H1 (cell line): ENCODE measurements at regions of chr1 and their contacts with region 1.

Region 1: GRCh38 chr1:47262787-47263413 is 30.9 kb upstream of the TAL1 start:
- DNase-seq: peak in 1 of 2 experiments; percentile 73
- H3K4me3 ChIP-seq: no peak overlapping the region
- H3K27ac ChIP-seq: no peak overlapping the region
- H3K4me1 ChIP-seq: no peaks in the 10 kb centered on the region
- H3K27me3 ChIP-seq: no peaks in the 10 kb centered on the region
- CTCF ChIP-seq: peak in 2 of 3 experiments; percentile 80 to 82; a peak in 3 of 4 replicates
- EP300 ChIP-seq: no peak
- POLR2A ChIP-seq: no peak
- RAD21 ChIP-seq: peak; percentile 70 to 76

Region 2: DNA sequence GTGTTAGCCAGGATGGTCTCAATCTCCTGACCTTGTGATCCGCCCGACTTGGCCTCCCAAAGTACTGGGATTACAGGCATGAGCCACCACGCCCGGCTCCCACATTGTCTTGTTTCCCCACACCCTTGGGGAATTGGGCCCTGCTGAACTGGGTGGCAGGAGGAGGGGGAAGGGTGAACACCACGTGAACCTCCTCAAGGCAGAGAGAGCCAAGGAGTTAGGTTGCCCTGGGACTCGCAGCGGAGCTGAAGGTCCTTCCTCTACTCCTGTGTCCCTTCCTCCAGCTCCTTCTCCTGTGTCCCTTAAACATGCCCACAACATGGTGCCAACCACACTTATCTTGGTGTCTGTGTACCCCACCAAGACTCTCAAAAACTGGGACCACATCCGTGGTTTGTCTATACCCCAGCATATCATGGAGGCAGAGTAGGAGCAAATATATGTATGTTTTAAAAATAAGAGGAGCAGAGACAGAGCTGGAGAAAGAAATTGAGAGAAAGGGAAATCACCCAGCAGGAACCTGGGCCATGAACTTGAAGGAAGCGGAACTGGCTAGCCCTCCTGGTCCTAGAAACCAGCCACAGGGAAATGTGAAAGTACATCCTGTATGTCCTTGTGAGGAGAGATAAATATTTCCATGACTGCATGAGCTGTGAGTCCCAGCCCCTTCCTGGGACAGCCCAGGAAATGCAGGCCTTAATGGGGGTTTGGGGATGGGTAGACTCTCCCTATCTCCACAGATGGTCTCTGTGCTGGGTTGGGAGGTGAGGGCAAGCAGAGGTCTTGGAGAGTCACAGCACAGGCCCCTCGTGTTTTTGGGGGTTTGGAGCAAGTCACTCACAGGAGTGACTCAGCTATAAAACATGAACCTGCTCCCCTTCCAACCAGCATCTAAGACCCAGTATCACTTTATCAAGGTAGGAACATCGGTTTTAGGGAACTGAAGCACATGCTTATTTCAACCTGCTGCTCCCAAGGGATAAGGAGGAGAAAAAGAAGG is 21.5 kb before region 1 on chr1:
- CTCF ChIA-PET with region 1: interaction called, 24 read pairs
- POLR2A ChIA-PET with region 1: interaction called, 3 read pairs
- DNase-seq: no peak
- H3K4me3 ChIP-seq: no peak overlapping the region
- H3K27ac ChIP-seq: no peak overlapping the region
- H3K4me1 ChIP-seq: peaks cover 0 to 5% (median 0%) of the 10 kb centered on the region in 4 experiments; a peak in 2 of 7 replicates
- H3K27me3 ChIP-seq: peaks cover under 1 to 6% (median 5%) of the 10 kb centered on the region in 4 experiments; a peak in 5 of 7 replicates
- CTCF ChIP-seq: no peak
- EP300 ChIP-seq: no peak
- POLR2A ChIP-seq: no peak
- RAD21 ChIP-seq: no peak

Region 3: DNA sequence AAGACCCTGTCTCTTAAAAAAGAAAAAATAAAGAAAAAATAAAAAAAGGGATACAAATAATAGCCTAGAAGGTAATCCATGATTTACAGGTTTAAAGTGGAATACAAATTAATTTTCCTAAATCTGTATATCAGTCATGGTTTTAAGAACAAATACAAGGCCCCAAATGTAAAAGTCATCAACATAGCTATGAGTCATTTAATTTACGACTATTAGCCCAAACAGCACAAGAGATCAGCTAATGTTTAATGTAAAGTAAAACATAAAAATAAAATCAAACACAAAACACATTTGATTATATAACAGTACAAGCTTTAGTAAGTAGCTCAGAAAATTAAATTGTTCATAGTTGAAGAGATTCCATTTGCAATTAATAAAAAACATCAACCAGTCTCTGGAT is 10.5 kb before region 1 on chr1:
- CTCF ChIA-PET with region 1: interaction called, 47 read pairs
- POLR2A ChIA-PET with region 1: no interaction called
- DNase-seq: no peak
- H3K4me3 ChIP-seq: no peak overlapping the region
- H3K27ac ChIP-seq: no peak overlapping the region
- H3K4me1 ChIP-seq: no peaks in the 10 kb centered on the region
- H3K27me3 ChIP-seq: no peaks in the 10 kb centered on the region
- CTCF ChIP-seq: no peak
- EP300 ChIP-seq: no peak
- POLR2A ChIP-seq: no peak
- RAD21 ChIP-seq: no peak

Region 4: DNA sequence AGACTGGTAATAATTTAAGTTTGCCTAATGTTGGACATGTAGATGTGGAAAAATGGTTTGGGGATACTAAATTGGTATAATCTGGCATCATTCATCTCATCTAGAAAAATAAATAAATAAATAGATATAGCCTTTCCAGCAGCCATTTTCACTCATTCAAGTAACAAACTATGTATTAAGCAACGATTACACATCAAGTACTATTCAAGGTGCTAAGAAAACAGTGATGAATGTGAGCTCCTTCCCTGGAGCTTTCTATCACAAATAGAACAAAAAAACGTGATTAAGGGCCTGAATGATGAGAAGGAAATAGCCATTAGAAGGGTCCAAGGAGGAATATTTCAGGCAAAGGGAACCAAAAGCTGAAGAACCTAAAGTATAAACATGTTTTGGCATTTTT is 13.9 kb after region 1 on chr1:
- CTCF ChIA-PET with region 1: interaction called, 48 read pairs
- POLR2A ChIA-PET with region 1: interaction called, 3 read pairs
- DNase-seq: no peak
- H3K4me3 ChIP-seq: no peak overlapping the region
- H3K27ac ChIP-seq: no peak overlapping the region
- H3K4me1 ChIP-seq: no peaks in the 10 kb centered on the region
- H3K27me3 ChIP-seq: no peaks in the 10 kb centered on the region
- CTCF ChIP-seq: no peak
- EP300 ChIP-seq: no peak
- POLR2A ChIP-seq: no peak
- RAD21 ChIP-seq: no peak